ENCODE measurements at regions of chr14 and their contacts with region 1.

Region 1: GRCh38 chr14:49461529-49462401 is 124.4 kb downstream of the RPS29 start:
- DNase-seq: peak; percentile 66
- H3K4me3 Mint-ChIP-seq: no peak overlapping the region
- H3K27ac Mint-ChIP-seq: no peak overlapping the region
- H3K4me1 Mint-ChIP-seq: no peaks in the 10 kb centered on the region
- H3K27me3 Mint-ChIP-seq: peaks cover 7% of the 10 kb centered on the region

Region 2: DNA sequence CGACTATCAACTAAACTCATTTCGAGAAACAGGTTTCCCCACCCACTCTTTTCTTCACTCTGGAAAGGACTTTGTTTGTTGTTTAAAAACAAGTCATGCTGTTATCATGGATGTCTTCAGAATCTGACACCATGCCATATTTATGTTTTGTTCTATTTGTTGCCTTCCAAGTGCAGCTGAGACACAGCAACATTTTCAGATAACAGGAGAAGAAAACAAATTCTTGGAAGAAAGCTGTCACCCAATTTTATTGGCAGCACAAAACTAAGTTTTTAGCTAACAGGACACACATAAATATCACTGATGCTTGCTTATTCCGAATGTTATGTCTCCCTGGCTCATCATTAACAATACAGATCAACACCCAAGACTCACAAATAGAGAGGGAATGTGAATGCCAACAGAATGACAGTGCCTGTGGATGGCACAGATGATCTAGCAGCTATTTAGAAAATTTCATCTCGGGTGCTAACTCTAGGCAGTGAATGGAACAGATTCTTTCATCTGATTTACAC is 23.5 kb before region 1 on chr14:
- CTCF ChIA-PET with region 1: interaction called, 12 read pairs
- DNase-seq: no peak
- H3K4me3 Mint-ChIP-seq: no peak overlapping the region
- H3K27ac Mint-ChIP-seq: no peak overlapping the region
- H3K4me1 Mint-ChIP-seq: no peaks in the 10 kb centered on the region
- H3K27me3 Mint-ChIP-seq: peaks cover 14% of the 10 kb centered on the region

Region 3: DNA sequence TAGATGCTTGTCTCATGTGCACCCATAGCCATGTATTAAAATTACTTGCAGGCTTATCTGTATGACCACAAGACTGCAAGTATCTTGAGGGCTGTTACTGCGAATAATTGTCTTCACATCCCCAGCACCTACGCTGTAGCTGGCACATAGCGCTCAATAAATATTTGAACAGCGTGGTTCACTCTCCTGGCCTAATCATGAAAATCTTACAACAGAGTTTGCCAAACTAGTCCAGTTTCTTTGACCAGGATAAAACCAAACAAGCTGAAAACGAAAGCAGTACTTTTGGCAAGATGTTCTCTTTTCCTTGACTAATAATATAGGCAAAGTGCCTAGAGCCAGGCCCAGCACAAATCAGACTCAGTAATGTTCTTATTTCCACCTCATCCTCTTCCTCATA is 17.7 kb after region 1 on chr14:
- CTCF ChIA-PET with region 1: interaction called, 30 read pairs
- DNase-seq: no peak
- H3K4me3 Mint-ChIP-seq: no peak overlapping the region
- H3K27ac Mint-ChIP-seq: no peak overlapping the region
- H3K4me1 Mint-ChIP-seq: peaks cover 6% of the 10 kb centered on the region
- H3K27me3 Mint-ChIP-seq: peaks cover 4% of the 10 kb centered on the region

Region 4: DNA sequence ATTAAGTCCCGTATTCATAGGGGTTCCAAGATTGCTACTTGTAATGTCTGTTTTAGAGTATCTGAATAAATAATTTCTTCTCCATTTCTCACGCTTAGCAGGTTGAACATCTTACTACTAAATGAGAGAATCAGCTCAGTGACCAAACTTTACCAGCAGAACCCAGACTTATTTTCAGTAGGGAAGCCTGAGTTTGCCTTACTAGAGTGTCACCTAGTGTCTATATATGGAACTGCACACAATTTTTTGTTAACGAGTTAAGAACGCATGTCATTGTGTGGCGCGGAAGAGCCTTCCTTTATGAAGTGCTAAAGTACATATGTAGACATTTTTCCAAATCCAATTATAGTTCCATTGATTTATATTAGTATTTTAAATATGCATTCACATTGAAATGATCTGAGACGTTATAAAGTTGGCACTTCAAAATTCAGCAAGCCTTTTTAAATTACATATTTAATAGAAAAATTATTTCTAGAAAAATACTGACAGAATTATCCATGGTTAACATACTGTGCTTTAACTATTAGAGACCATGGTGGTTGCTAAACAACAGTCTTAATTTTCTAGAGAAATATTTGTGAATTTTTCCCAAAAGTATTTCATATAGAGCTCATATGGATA is 36.1 kb after region 1 on chr14:
- CTCF ChIA-PET with region 1: interaction called, 79 read pairs
- DNase-seq: no peak
- H3K4me3 Mint-ChIP-seq: no peak overlapping the region
- H3K27ac Mint-ChIP-seq: no peak overlapping the region
- H3K4me1 Mint-ChIP-seq: no peaks in the 10 kb centered on the region
- H3K27me3 Mint-ChIP-seq: peaks cover 5% of the 10 kb centered on the region